Sigmoid colon (tissue), 7 donors: ENCODE measurements at regions of chr7 and their contacts with region 1.

Region 1: DNA sequence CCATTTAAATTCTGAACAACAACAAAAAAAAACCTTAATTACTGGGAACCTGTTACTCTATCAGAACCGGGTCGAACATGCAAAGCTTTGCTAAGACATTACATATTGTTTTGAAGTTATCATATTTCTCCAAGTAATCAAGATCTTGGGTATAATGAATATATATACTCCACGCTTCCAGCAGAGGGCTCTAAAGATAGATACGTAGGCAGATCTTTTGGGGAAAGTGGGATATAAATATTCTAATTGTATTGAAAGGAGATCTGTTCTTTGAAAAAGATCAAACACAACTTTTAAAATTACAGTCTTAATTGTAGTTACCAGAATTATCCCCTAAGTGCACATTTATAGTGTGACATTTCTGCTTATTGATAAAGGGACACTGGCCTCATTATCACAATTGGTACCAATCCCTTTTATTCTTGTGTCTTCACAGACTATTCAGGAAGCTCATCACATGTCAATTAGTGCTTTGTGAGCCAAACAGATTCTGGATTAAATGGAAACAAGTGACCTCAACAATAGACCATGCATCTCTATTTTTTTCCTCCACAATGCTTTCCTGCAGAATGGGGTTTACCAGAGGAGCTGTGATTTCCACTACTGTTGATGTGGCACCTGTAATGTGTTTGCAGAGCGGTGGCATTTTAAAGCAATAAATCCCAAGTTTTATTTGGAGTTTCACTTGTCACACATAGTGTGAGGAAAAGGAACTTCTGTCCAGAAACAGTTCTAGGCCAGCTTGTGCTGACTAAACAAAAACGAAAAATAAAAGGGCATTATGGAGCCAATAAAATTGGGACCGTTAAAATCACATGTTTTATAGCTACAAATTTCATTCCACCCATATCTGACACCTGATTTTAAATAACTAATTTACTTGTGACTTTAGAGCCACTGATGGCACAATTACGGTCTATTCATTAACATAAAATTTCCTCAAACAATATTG is 122.4 kb downstream of the CTTNBP2 start:
- DNase-seq: no peak
- H3K4me3 ChIP-seq: no peak overlapping the region
- H3K27ac ChIP-seq: no peak overlapping the region
- H3K4me1 ChIP-seq: no peaks in the 10 kb centered on the region
- H3K27me3 ChIP-seq: no peaks in the 10 kb centered on the region
- CTCF ChIP-seq: peak in 3 of 4 experiments; percentile 7 to 54 (median 42)
- EP300 ChIP-seq: no peak
- POLR2A ChIP-seq: no peak

Region 2: GRCh38 chr7:117873310-117874190 is 122.7 kb after region 1 on chr7 and contains the start of gene CTTNBP2:
- intact Hi-C with region 1: loop called (anchors 5 kb)
- DNase-seq: peak; percentile 73
- H3K4me3 ChIP-seq: peak within 1 kb of the TSS; percentile 71 to 95 (median 83)
- H3K27ac ChIP-seq: peak within 1 kb of the TSS; percentile 68 to 87 (median 74)
- H3K4me1 ChIP-seq: peaks cover 0 to 45% (median 35%) of the 10 kb centered on the region in 4 donors
- H3K27me3 ChIP-seq: no peaks in the 10 kb centered on the region
- CTCF ChIP-seq: no peak
- EP300 ChIP-seq: no peak
- POLR2A ChIP-seq: no peak
- total RNA-seq, gene CTTNBP2: 4.9 to 11.1 (median 7.5) TPM

Region 3: GRCh38 chr7:117949232-117949631 is 198.3 kb after region 1 on chr7:
- intact Hi-C with region 1: no loop called
- DNase-seq: no peak
- H3K4me3 ChIP-seq: no peak overlapping the region
- H3K27ac ChIP-seq: no peak overlapping the region
- H3K4me1 ChIP-seq: no peaks in the 10 kb centered on the region
- H3K27me3 ChIP-seq: no peaks in the 10 kb centered on the region
- CTCF ChIP-seq: no peak
- EP300 ChIP-seq: no peak
- POLR2A ChIP-seq: no peak

Region 4: GRCh38 chr7:118104812-118105441 is 354.0 kb after region 1 on chr7:
- intact Hi-C with region 1: loop called (anchors 2 kb)
- DNase-seq: no peak
- H3K4me3 ChIP-seq: no peak overlapping the region
- H3K27ac ChIP-seq: no peak overlapping the region
- H3K4me1 ChIP-seq: no peaks in the 10 kb centered on the region
- H3K27me3 ChIP-seq: no peaks in the 10 kb centered on the region
- CTCF ChIP-seq: peak in 2 of 4 experiments; percentile 17 to 48
- EP300 ChIP-seq: no peak
- POLR2A ChIP-seq: no peak

Region 5: DNA sequence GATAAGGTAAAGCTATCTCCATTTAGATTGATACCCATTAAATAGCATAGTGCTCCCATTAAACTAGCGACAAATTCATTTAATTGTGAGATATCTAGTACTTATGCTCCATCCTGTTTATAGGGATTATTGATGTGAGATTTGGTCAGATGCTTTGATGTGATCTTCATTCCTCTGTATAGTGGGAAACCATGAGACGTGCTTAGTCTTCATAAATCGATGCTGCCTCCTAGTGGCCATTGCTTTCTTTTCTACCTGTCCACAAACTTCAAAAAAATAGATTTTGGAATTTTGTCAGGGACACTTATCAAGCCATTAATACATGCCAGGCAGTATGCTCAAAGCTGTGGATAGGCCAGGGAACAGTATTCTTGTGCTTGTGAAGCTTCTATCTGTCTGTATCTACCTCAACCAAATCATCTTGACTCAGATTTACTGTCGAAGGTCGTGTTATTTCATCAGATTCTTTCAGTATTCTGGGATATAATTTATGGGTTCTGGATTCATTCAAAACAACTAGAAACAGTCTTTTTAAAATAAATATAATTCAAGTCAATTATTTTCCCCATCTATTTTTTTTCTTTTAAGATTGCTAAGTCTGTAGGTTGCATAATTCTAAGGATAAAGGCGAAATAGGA is 445.1 kb after region 1 on chr7:
- intact Hi-C with region 1: loop called (anchors 5 kb)
- DNase-seq: no peak
- H3K4me3 ChIP-seq: no peak overlapping the region
- H3K27ac ChIP-seq: no peak overlapping the region
- H3K4me1 ChIP-seq: peaks cover 0 to 3% (median 0%) of the 10 kb centered on the region in 4 donors
- H3K27me3 ChIP-seq: no peaks in the 10 kb centered on the region
- CTCF ChIP-seq: peak in 3 of 4 experiments; percentile 51 to 64 (median 51)
- EP300 ChIP-seq: no peak
- POLR2A ChIP-seq: no peak